Activated naive CD4-positive, alpha-beta T cell treated with anti-CD3 and anti-CD28 coated beads, Interleukin-2, amount 10 ng/mL, durations not matched to agents 7 days and 5 days (primary cell): ENCODE measurements at regions of chr2 and their contacts with region 1.

Region 1: DNA sequence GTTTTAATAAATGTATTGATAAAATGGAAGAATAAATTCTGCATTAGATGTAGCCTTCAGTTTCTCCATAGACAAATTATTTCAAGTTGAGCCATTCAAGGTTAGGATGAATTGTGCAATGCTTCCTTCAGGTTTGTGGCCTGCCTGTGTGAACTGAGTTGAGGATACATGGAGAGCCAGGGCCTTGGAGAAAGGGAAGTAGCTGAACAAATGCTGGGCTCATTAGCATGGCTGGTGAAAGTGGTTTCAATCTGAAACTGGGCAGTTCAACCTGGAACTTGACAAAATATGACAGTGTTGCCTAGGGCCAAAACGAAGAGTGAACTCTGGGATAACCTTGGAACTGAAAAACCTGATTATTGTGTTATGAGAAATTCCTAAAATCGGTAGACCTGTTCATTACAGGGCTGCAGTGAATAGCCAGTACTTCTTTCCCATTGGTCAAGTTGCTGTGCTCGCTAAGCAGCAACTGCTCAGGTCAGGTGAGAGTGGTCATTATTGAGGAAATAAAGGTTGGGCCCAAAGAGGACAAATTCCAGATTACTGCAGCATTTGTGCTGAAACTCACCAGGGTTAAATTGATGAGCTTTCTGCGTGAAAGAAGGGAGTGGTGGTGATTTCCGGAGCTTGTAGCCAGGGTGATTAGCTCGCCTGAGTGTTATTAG is 12.7 kb downstream of the INPP1 start:
- DNase-seq: no peak
- H3K4me3 Mint-ChIP-seq: no peak overlapping the region
- H3K27ac Mint-ChIP-seq: no peak overlapping the region
- H3K4me1 Mint-ChIP-seq: peaks cover 22% of the 10 kb centered on the region
- H3K27me3 Mint-ChIP-seq: no peaks in the 10 kb centered on the region

Region 2: DNA sequence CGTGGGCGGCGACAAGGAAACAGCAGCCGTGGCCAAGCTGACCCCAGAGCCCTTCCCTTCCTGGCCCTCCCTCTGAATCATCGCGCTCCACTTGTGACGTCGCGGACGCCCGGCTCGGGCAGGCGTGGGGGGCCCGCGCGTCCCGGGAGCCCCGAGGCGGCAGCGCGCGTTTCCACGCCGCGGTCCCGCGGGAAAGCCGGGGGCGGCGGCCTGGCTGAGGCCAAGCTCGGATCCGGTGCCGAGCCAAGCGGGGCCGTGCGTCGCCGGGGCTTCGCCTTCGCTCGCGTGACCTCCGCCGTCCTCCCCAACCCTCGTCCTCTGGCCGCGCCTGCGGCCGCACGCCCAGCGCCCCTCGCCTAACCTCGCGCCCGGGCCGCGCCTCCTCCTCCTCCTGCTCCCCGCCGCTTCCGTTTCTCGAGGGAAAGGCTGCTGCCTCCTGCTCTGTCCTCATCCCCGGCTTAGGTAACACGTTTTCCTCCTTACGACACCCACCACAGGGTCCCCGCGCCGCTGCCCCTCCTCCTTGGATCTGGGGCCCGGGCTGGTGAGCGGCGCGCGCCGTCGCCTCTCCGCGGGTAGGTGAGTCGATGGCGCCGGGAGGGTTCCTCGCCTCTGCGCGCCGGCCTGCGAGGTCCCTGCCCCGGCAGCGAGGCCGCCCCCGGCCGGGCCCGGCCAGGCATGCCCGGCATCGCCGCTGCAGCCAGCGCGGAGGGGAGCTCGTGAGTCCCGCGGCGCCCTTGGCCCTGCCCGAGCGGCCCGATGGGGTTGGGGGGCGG is 12.4 kb before region 1 on chr2 and contains the start of gene INPP1:
- CTCF ChIA-PET with region 1: interaction called, 12 read pairs
- DNase-seq: peak; percentile 59
- H3K4me3 Mint-ChIP-seq: peak within 1 kb of the TSS; percentile 75
- H3K27ac Mint-ChIP-seq: peak within 1 kb of the TSS; percentile 49
- H3K4me1 Mint-ChIP-seq: peaks cover 14% of the 10 kb centered on the region
- H3K27me3 Mint-ChIP-seq: peaks cover 27% of the 10 kb centered on the region

Region 3: GRCh38 chr2:190382851-190383250 is 26.7 kb after region 1 on chr2:
- CTCF ChIA-PET with region 1: interaction called, 10 read pairs
- DNase-seq: peak; percentile 31
- H3K4me3 Mint-ChIP-seq: no peak overlapping the region
- H3K27ac Mint-ChIP-seq: no peak overlapping the region
- H3K4me1 Mint-ChIP-seq: no peaks in the 10 kb centered on the region
- H3K27me3 Mint-ChIP-seq: peaks cover 5% of the 10 kb centered on the region